Vagina (tissue), 2 donors: ENCODE measurements at regions of chr1 and their contacts with region 1.

Region 1: GRCh38 chr1:27392096-27392777 is at the start of gene GPR3:
- DNase-seq: no peak
- H3K4me3 ChIP-seq: peak within 1 kb of the TSS; percentile 46 to 59
- H3K27ac ChIP-seq: peak within 1 kb of the TSS; percentile 78
- H3K4me1 ChIP-seq: peaks cover 19% of the 10 kb centered on the region
- H3K27me3 ChIP-seq: no peaks in the 10 kb centered on the region
- CTCF ChIP-seq: peak; percentile 43 to 65 (median 51)
- POLR2A ChIP-seq: no peak
- total RNA-seq, gene GPR3: 0.74 TPM

Region 2: DNA sequence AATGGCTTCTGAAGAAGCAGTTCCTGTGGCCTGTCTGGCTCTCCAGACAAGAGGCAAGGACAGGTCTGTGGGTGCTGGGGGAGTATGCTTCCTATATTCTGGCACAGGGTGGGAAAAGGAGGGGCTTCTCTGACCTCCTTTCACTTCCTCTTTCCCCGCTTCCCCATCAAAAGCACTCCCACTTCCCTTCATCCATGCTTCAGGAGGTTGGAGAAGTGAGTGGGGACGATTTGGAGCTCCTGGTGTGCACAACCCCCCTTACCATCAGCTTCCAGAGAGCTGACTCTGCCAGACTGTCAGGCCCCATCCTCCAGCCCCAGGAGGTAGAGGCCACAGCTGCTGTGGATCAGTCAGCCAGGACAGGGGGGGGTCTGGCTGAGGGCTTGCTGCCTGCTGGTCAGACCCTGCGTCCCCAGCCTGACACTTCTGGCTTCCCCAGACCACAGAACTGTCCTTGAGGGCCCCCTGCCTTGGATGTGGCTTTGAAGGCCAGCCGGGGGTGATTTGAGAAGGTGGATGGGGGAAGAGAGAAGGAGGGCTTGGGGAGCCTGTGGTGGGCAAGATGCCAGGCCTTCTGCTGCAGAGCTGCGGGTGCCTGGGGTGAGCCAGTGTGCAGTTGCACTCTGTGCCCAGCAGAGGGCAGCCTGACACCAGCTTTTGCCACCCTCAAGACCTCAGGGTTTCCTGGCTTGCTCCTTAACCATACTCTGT is 91.7 kb before region 1 on chr1:
- intact Hi-C with region 1: loop called (anchors 2 kb)
- DNase-seq: peak in 1 of 2 donors; percentile 93
- H3K4me3 ChIP-seq: no peak overlapping the region
- H3K27ac ChIP-seq: peak overlapping the region; percentile 90
- H3K4me1 ChIP-seq: peaks cover 41% of the 10 kb centered on the region
- H3K27me3 ChIP-seq: no peaks in the 10 kb centered on the region
- CTCF ChIP-seq: peak; percentile 95 to 99 (median 99)
- POLR2A ChIP-seq: no peak

Region 3: DNA sequence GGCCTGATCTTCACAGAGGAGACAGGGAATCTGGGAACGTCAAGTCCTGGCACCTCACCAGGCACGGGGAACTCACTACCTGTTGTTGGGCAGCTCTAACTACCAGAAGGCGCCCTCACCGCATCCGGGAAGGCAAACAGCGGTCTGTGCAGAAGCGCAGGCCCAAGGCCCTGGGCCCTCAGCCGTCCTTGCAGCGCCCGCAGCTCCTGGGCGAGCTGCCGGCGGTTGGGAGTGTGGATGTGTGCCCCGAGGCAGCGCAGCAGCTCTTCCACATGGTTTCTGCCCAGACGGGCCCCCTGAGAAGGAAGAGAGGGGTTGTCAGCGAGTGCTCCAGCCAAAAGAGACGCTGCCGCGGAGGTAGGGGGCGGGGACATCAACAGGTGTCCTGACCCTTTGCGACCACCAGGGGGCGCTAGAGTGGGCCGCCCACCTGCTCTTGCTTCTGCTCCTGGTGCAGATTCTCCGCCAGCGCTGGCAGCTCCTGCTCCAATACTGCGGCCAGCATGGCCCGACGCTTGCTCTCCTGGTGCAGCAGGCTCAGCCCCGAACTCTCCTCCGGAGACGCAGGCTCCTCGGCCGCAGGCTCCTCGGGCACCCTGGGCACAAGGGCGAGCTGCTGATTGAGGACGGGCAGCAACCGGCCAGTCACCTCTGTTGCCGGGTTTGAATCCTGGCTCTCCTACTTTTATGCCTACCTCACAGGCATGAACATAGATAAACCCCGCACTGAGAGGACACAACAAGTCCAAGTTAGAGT is 34.8 kb before region 1 on chr1:
- intact Hi-C with region 1: loop called (anchors 2 kb)
- DNase-seq: no peak
- H3K4me3 ChIP-seq: no peak overlapping the region
- H3K27ac ChIP-seq: peak overlapping the region; percentile 42
- H3K4me1 ChIP-seq: peaks cover 12% of the 10 kb centered on the region
- H3K27me3 ChIP-seq: no peaks in the 10 kb centered on the region
- CTCF ChIP-seq: peak; percentile 88 to 96 (median 93)
- POLR2A ChIP-seq: no peak